Mammary epithelial cell (primary cell): ENCODE measurements at regions of chr10 and their contacts with region 1.

Region 1: DNA sequence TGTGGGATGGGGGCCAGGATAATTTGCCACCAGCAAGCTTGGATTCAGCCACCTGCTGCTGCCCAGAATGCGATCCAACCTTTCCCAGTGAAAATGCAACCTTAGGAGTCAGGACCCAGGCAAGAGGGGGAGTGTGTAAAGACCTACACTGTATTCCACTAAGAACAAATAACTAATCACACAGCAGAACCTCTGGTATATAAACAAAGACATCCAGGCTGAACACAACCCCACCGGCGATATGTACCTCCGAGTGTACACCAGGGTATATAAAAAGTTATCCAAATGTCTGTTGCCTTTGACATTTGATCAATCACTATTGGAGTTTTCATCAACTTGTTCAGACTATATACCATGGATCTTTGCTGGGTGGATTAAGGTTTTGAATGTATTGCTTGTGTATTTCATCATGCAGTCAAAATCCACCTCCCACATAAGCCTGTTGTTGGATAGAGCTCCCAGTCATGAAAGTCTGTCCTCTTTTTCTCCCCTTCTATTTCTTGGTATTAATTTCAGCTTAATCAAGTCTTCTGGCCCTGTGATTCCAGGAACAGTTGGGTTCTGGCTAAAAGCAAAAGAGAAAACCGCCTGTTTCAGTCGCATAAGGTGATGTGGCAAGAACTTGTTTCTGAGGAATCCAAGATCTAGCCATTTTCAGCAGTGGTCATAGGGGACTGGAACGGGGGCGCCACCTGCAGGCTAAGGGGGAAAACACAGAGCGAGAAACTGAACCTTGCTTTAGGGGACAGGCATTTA is 290.7 kb downstream of the CCDC3 start:
- DNase-seq: peak; percentile 65
- H3K4me3 ChIP-seq: no peak overlapping the region
- H3K27ac ChIP-seq: peak overlapping the region; percentile 4
- H3K4me1 ChIP-seq: peaks cover 33% of the 10 kb centered on the region
- H3K27me3 ChIP-seq: no peaks in the 10 kb centered on the region
- CTCF ChIP-seq: peak; percentile 96 to 99

Region 2: DNA sequence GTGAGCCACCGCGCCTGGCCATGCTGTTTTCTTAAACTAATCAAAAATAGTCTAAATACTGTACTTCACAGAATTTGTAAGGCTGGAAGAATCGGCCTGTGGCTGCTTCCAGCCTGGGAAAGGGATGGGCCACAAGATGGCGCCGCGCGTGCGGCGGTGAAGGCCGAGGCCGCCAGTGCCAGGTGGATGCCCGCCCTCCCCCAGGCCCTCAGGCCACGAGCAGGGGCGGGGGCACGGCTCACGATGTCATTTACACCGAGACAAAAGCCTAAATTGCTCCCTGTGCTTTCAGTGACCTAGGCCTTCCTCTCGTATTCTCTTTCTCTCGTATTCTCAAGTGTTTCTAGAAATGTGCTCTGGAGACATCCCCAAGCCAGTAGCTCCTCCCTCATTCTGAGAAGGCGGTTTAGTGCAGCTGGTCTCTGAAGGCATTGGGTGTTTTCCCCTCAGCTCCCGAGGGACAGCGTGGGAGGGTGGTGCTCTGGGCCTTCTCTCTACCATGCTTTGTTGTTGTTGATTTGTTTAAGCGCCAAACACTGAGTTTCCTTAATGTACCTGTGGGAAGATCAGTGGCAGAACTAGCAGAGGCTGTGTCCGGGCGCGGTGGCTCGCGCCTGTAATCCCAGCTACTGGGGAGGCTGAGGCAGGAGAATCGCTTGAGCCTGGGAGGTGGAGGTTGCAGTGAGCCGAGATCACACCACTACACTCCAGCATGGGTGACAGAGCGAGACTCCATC is 446.4 kb before region 1 on chr10:
- CTCF ChIA-PET with region 1: interaction called, 5 read pairs
- dilution Hi-C with region 1: loop called (anchors 25 kb)
- in situ Hi-C with region 1: loop called (anchors 5 kb)
- intact Hi-C with region 1: loop called (anchors 1 kb)
- DNase-seq: peak; percentile 67
- H3K4me3 ChIP-seq: peak overlapping the region; percentile 15 to 39 (median 19)
- H3K27ac ChIP-seq: no peak overlapping the region
- H3K4me1 ChIP-seq: peaks cover 3% of the 10 kb centered on the region
- H3K27me3 ChIP-seq: no peaks in the 10 kb centered on the region
- CTCF ChIP-seq: peak; percentile 67 to 89

Region 3: DNA sequence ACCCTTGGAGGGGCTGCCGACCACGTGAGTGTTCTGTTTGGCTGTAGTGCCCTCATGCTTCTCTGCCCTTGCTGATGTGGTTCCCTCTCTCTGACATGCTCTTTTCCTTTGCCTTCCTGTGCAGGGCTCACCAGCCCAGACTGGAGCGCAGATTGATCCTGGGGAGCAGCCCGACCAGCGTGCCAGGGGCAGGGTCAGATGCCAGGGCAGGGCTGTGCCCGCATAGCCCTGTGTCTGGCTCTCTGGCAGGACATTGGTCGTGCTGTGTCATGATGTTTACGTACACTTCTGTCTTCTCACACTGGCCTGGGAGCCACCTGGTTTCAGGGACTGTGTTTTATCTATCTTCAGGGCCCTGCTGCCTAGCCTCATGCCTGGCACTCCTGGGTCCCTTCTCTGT is 60.6 kb before region 1 on chr10:
- CTCF ChIA-PET with region 1: no interaction called
- dilution Hi-C with region 1: loop called (anchors 5 kb)
- in situ Hi-C with region 1: no loop called
- intact Hi-C with region 1: no loop called
- DNase-seq: no peak
- H3K4me3 ChIP-seq: no peak overlapping the region
- H3K27ac ChIP-seq: no peak overlapping the region
- H3K4me1 ChIP-seq: no peaks in the 10 kb centered on the region
- H3K27me3 ChIP-seq: no peaks in the 10 kb centered on the region
- CTCF ChIP-seq: no peak

Region 4: GRCh38 chr10:12790270-12790669 is 79.5 kb after region 1 on chr10:
- CTCF ChIA-PET with region 1: no interaction called
- dilution Hi-C with region 1: no loop called
- in situ Hi-C with region 1: no loop called
- intact Hi-C with region 1: no loop called
- DNase-seq: no peak
- H3K4me3 ChIP-seq: no peak overlapping the region
- H3K27ac ChIP-seq: no peak overlapping the region
- H3K4me1 ChIP-seq: no peaks in the 10 kb centered on the region
- H3K27me3 ChIP-seq: no peaks in the 10 kb centered on the region
- CTCF ChIP-seq: no peak

Region 5: GRCh38 chr10:12844811-12845533 is 134.2 kb after region 1 on chr10:
- CTCF ChIA-PET with region 1: no interaction called
- dilution Hi-C with region 1: no loop called
- in situ Hi-C with region 1: no loop called
- intact Hi-C with region 1: loop called (anchors 5 kb)
- DNase-seq: peak; percentile 51
- H3K4me3 ChIP-seq: peak overlapping the region in 2 of 3 experiments; percentile 30 to 35
- H3K27ac ChIP-seq: peak overlapping the region; percentile 7
- H3K4me1 ChIP-seq: peaks cover 18% of the 10 kb centered on the region
- H3K27me3 ChIP-seq: no peaks in the 10 kb centered on the region
- CTCF ChIP-seq: no peak

Region 6: GRCh38 chr10:13099666-13100348 is 389.0 kb after region 1 on chr10 and contains the start of gene OPTN:
- CTCF ChIA-PET with region 1: interaction called, 3 read pairs
- dilution Hi-C with region 1: no loop called
- in situ Hi-C with region 1: no loop called
- intact Hi-C with region 1: loop called (anchors 1 kb)
- DNase-seq: peak; percentile 82
- H3K4me3 ChIP-seq: peak within 1 kb of the TSS; percentile 69 to 95 (median 82)
- H3K27ac ChIP-seq: peak within 1 kb of the TSS; percentile 74
- H3K4me1 ChIP-seq: peaks cover 6% of the 10 kb centered on the region
- H3K27me3 ChIP-seq: no peaks in the 10 kb centered on the region
- CTCF ChIP-seq: peak; percentile 76 to 89
- total RNA-seq, gene OPTN: 60.0 to 142 TPM